ENCODE measurements at regions of chr6 and their contacts with region 1.

Region 1: DNA sequence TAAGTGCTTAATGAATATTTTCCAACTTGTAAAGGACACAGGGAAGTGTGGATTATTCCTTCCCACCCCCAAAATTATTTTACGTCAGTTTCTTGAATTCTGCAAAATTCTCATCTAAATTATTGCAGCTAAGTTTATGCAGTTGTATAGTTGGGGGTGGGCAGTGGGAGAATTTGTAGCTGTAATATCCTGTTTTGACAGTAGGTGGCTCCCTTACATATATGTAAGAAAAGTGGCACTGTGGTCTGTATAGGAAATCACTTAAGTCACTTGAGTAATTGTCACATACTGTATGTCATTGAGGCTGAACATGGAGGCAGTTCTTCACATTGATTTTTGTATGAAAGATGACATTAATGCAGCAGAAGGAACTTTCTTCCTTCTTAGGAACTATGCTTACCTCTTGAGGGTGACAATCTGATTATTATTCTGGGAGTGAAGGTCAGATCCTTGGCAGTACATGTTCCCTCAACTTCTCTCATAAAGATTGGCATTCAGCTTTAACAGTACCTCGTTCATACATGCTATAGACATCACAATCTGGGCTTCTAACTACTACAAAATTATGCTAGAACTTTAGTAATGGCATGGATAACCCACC is 14.7 kb upstream of the CFAP206 start:
- DNase-seq: peak; percentile 13
- H3K4me3 ChIP-seq: no peak overlapping the region
- H3K27me3 ChIP-seq: no peaks in the 10 kb centered on the region
- CTCF ChIP-seq: peak; percentile 64

Region 2: DNA sequence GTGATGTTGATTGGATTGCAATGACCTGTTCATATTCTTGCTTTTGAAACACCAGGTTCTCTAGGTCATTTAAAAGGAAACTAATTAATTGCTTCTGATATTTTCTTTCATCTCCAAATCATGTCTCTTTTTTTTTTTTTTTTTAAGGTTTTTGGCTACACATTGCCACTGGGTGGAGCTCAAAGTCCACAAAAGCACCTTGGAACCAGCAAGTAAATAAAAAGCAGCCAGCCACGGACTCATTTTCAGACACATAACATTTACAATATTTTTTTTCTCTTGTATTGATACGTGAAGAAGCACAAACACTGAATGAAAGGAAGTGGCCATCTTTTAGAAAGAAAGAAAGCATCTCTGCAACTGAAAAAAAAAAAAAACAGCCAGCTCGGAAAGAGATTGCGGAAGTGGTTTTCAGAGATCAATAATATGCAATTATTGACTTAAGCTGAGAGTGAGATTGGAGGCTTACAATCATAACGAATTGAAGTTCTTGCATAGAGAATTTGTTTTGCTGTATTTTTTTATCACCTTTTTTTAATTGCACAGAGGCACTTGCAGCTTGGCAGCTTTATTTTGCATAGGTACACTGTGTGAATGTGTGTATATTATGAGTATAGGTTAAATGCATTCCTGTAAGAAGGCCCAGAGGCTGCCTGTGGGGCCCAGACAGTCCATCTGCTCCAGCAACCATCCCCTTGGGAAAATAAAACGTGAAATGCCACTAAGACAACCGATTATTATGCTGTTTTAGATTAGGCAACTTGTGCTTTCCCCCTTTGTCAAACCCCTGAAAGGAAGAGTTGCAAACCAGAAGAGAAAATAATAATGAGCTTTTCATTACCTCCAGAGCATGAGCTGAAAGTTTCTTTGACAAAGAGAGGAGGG is 326.4 kb before region 1 on chr6:
- CTCF ChIA-PET with region 1: interaction called, 11 read pairs
- POLR2A ChIA-PET with region 1: no interaction called
- DNase-seq: peak; percentile 8
- H3K4me3 ChIP-seq: no peak overlapping the region
- H3K27me3 ChIP-seq: peaks cover 5% of the 10 kb centered on the region; the same call in 1 of the 2 replicates
- CTCF ChIP-seq: peak; percentile 59

Region 3: GRCh38 chr6:87139236-87139635 is 253.9 kb before region 1 on chr6:
- CTCF ChIA-PET with region 1: interaction called, 18 read pairs
- POLR2A ChIA-PET with region 1: no interaction called
- DNase-seq: no peak
- H3K4me3 ChIP-seq: no peak overlapping the region
- H3K27me3 ChIP-seq: no peaks in the 10 kb centered on the region; the same call in 1 of the 2 replicates
- CTCF ChIP-seq: peak; percentile 73

Region 4: DNA sequence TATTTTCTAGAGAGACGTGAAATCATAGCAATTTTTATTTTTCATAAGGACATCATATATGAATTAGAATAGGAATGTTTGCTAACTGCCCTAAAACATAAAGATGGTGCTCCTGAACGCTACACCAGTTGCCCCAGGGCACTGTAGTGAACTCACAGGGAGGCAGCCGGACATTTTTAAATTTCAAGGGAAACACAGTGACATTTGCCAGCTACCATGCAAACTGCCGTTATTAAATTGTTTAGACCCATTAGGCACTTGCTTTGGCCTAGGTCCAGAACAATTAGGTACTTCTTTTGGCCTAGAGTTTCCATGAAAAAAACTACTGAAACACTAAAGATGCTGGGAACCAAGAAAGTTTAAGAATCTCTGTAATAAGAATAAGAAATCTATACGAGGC is 10.3 kb before region 1 on chr6:
- CTCF ChIA-PET with region 1: interaction called, 12 read pairs
- POLR2A ChIA-PET with region 1: no interaction called
- DNase-seq: no peak
- H3K4me3 ChIP-seq: no peak overlapping the region
- H3K27me3 ChIP-seq: no peaks in the 10 kb centered on the region
- CTCF ChIP-seq: no peak

Region 5: GRCh38 chr6:88870717-88871330 is 1477.7 kb after region 1 on chr6:
- CTCF ChIA-PET with region 1: interaction called, 10 read pairs
- POLR2A ChIA-PET with region 1: no interaction called
- DNase-seq: no peak
- H3K4me3 ChIP-seq: no peak overlapping the region
- H3K27me3 ChIP-seq: no peaks in the 10 kb centered on the region
- CTCF ChIP-seq: peak; percentile 41